Heart left ventricle (tissue), 16 donors: ENCODE measurements at regions of chr20 and their contacts with region 1.

Region 1: DNA sequence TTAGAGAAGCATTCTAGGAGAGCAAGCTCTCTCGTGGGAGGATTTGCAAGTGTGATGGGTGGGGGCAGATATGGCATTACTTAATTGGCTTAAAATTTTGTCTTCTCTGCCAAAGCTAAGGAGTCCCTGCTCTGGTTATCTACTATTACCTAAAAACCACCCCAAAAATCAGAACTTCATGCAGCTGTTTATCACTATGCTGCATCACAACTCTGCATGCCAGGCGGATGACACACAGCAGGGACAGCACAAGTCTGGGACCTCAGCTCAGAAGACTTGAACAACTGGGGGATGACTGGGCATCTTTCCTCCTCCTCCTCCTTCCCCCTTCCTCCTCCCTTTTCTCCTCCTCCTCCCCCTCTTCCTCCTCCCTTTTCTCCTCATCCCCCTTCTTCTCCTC is 218.4 kb upstream of the PMEPA1 start:
- DNase-seq: no peak
- ATAC-seq: peak in 1 of 4 donors; percentile 34
- H3K4me3 ChIP-seq: no peak overlapping the region
- H3K27ac ChIP-seq: no peak overlapping the region
- H3K4me1 ChIP-seq: peaks cover 0 to 2% (median 0%) of the 10 kb centered on the region in 12 donors
- H3K27me3 ChIP-seq: no peaks in the 10 kb centered on the region
- CTCF ChIP-seq: no peak
- POLR2A ChIP-seq: no peak

Region 2: GRCh38 chr20:57779461-57779886 is 148.7 kb before region 1 on chr20:
- intact Hi-C with region 1: no loop called
- DNase-seq: no peak
- ATAC-seq: no peak
- H3K4me3 ChIP-seq: no peak overlapping the region
- H3K27ac ChIP-seq: no peak overlapping the region
- H3K4me1 ChIP-seq: no peaks in the 10 kb centered on the region
- H3K27me3 ChIP-seq: no peaks in the 10 kb centered on the region
- CTCF ChIP-seq: no peak
- POLR2A ChIP-seq: no peak

Region 3: GRCh38 chr20:57985278-57985677 is 57.1 kb after region 1 on chr20:
- intact Hi-C with region 1: loop called in 1 of 10 experiments (anchors 10 kb)
- DNase-seq: peak in 4 of 5 donors; percentile 37 to 65 (median 48)
- ATAC-seq: peak; percentile 28 to 66 (median 38)
- H3K4me3 ChIP-seq: no peak overlapping the region
- H3K27ac ChIP-seq: no peak overlapping the region
- H3K4me1 ChIP-seq: peaks cover 0 to 19% (median 0%) of the 10 kb centered on the region in 12 donors
- H3K27me3 ChIP-seq: no peaks in the 10 kb centered on the region
- CTCF ChIP-seq: no peak
- POLR2A ChIP-seq: no peak